ENCODE measurements at regions of chr14 and their contacts with region 1.

Region 1: DNA sequence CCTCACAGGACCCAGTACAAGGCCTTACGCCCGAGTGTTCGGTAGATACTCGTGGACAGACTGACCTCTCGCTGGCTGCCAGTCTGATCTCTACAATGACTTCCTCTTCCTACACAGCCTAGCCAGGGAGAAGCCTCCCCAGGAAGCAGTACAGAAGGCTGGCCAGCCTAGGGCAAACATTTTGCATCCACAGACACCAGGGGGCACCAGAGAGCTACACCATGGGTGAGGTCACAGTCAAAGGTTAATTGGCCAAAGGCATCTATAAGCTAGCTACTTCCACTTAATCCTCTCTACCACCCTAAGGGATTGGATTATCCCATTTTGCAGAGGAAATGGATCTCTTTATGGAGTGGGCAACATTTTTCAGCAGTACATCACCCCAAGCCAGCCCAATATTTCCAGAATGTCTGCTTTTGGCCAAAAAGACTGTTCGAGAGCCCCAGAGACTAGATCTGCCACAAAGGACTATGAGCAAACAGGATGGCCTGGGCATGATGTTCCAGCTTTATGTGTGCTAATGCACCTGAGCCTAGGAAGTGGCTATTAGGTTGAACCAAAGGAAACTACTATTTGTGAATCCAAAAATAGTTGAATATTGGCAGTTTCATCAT is 14.6 kb upstream of the PNMA1 start:
- DNase-seq: peak; percentile 95
- H3K4me3 ChIP-seq: no peak overlapping the region
- H3K27ac ChIP-seq: peak overlapping the region; percentile 65 to 98 (median 90)
- H3K4me1 ChIP-seq: peaks cover 64 to 84% (median 79%) of the 10 kb centered on the region in 4 donors
- H3K27me3 ChIP-seq: no peaks in the 10 kb centered on the region
- CTCF ChIP-seq: peak; percentile 94 to 95 (median 95)
- EP300 ChIP-seq: no peak
- POLR2A ChIP-seq: no peak

Region 2: GRCh38 chr14:73564889-73565288 is 163.9 kb before region 1 on chr14:
- intact Hi-C with region 1: no loop called
- DNase-seq: no peak
- H3K4me3 ChIP-seq: no peak overlapping the region
- H3K27ac ChIP-seq: no peak overlapping the region
- H3K4me1 ChIP-seq: peaks cover 13 to 29% (median 24%) of the 10 kb centered on the region in 4 donors
- H3K27me3 ChIP-seq: peaks cover 0 to 3% (median 0%) of the 10 kb centered on the region in 4 donors
- CTCF ChIP-seq: no peak
- EP300 ChIP-seq: no peak
- POLR2A ChIP-seq: no peak

Region 3: GRCh38 chr14:73696466-73697400 is 32.1 kb before region 1 on chr14:
- intact Hi-C with region 1: no loop called
- DNase-seq: no peak
- H3K4me3 ChIP-seq: no peak overlapping the region
- H3K27ac ChIP-seq: no peak overlapping the region
- H3K4me1 ChIP-seq: no peaks in the 10 kb centered on the region
- H3K27me3 ChIP-seq: no peaks in the 10 kb centered on the region
- CTCF ChIP-seq: no peak
- EP300 ChIP-seq: no peak
- POLR2A ChIP-seq: no peak

Region 4: GRCh38 chr14:73825551-73826188 is 96.8 kb after region 1 on chr14:
- intact Hi-C with region 1: loop called (anchors 2 kb)
- DNase-seq: peak; percentile 97
- H3K4me3 ChIP-seq: no peak overlapping the region
- H3K27ac ChIP-seq: peak overlapping the region in 1 of 4 donors; percentile 44
- H3K4me1 ChIP-seq: peaks cover 5 to 11% (median 9%) of the 10 kb centered on the region in 4 donors
- H3K27me3 ChIP-seq: no peaks in the 10 kb centered on the region
- CTCF ChIP-seq: peak; percentile 94 to 97 (median 94)
- EP300 ChIP-seq: no peak
- POLR2A ChIP-seq: no peak